Posterior vena cava (tissue), 2 donors: ENCODE measurements at regions of chr17 and their contacts with region 1.

Region 1: DNA sequence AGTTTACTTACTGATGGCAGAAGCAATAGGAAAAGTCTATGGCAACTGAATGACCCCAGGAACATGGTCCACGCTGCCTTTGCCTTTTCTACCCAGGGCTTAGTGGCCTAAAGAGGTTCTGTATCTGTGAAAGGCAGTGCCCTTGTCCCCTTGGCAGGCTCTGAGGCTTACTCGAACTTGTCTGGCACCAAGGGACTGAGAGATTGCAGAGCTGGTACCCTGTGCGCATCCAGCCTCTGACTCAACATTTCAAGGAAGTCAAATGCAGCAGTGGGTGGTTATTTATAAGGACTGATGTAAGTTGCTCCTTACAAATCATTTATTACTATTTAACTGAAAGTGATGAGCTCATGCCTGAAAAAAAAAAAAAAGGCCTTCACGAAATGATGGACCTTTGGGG is 299.9 kb upstream of the MYOCD start:
- DNase-seq: no peak

Region 2: GRCh38 chr17:12406623-12407215 is 40.9 kb after region 1 on chr17:
- intact Hi-C with region 1: no loop called
- DNase-seq: no peak

Region 3: DNA sequence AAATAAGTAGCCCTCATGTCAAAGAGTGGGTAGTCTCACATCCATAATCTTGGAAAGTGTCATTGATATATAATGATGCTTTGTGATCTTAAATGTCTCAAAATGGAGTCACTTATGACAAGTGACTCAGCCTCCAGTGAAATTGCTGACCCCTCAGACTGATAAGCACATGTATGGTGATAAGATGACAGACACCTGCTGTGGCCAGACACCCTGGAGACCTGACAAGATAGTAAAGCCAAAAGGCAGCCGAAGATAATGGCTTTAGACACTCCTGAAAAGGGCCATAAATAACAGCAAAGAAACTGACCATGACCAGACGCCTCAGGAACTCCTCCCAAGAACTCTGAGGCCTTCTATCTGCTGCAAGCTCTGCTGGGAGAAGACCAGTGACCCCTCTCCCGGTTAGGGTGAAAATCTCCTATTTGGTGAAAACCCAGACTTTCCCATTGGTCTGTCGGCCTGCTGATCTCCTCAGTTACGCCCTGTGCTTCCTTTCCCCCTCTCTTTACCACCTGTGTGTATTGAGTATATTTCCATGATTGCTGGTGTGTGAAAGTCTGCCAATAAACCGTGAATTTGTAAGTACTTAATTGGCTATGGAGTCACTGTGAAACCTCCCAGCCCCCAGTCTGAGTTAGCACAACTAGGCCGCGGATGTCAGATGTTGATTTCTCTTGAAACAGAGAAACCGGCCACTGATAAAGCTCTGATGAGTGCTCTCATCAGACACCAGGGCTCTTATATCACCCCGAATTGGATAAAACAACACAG is 73.2 kb after region 1 on chr17:
- intact Hi-C with region 1: no loop called
- DNase-seq: no peak

Region 4: DNA sequence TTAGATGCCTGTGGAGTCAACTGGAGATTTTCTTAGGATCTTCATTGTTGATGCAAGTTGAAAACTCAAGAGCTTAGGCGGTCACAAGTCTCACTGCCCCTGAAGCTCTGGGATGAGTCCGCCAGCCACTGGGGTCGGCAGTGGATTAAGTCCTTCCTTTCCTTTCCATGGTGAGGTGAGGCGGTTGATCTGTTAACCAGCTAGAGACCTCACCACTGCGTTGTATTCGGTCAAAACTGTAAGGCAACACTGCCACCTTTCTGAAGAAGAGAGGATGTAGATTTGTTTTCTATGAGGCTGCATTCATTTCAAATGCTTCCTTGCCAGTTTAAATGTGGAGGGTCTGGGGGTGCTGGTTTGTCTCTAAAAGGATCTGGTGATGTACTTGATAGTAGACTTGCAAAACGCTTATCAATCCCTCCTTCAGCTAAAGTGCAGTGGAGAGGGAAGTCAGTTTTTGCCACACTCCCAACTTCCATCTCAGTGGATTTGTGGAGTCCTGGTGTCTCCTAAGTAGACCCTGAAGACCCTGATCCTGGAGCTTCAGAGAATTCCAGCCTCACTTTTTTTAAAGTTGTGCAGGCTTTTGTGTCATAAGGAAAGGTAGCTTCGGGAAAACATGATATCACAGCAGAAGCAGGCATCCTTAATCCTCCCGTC is 301.6 kb after region 1 on chr17:
- intact Hi-C with region 1: loop called in 1 of 2 experiments (anchors 10 kb)
- DNase-seq: no peak

Region 5: DNA sequence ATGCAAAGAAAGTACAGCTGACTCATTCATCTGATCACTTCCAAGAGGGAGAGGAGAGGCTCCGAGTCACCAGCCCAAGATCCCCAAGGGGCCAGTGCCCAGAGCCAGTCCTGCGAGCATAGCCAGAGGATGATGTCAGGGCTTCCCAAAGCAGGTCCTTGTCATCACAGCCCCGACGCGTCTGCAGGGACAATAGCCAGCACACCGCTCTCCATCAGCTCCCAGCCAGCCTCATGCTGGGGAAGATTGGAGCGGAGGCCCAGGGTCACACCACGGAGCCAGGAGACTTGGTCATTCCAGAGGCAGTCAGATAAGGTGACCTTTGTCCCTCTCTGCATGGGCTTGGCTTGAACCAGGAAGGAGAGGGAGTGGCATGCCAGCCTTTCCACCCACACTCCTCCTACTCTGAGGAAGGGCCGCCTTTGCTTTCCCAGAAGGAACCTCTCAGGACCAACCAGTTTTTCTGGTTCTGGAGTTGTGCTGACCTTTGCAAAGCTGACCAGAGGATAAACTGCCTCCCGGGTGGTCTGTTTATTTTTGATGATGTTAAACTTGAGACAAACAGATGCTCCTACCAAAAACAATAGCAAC is 365.2 kb after region 1 on chr17:
- intact Hi-C with region 1: no loop called
- DNase-seq: peak; percentile 94